ENCODE measurements at regions of chr19 and their contacts with region 1.

Region 1: DNA sequence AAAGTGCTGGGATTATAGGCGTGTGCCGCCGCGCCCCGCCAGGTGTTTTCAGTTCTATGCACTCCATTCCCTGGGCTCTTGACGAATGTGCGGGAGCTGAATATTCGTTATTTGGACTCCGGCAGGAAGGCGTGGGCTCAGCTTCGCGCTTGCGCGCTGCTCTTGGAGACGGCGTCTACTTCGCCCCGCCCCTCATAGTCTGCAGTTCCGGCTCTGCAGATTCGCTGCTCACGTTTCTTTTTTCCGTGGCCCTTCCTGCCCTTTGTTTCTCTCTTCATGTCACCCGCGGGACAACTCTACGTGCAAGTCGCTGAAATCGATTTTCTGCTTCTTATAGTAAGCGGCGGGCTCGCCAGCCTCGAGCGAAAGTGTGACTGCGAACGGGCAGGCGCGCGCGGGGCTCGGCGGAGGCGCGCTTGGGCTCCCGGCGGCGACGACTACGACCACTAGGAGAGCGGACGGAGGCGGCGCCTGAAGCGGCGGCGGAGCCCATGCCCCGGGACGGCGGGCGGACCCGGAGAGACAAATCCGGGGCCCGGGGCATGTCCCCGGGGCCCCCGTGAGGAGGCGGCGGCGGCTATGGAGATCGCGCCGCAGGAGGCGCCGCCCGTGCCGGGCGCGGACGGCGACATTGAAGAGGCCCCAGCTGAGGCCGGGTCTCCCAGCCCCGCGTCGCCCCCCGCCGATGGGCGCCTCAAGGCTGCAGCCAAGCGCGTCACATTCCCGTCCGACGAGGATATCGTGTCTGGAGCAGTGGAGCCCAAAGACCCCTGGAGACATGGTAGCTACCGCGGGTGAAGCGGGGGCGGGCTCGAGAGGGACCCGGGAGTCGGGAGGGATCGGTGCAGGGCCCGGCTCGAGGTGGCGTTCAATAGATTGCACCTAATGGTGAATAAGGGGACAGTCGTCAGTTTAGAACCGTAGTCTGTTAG is at the start of gene PPP1R37:
- DNase-seq: peak; percentile 97
- total RNA-seq, gene PPP1R37: 18.6 TPM

Region 2: DNA sequence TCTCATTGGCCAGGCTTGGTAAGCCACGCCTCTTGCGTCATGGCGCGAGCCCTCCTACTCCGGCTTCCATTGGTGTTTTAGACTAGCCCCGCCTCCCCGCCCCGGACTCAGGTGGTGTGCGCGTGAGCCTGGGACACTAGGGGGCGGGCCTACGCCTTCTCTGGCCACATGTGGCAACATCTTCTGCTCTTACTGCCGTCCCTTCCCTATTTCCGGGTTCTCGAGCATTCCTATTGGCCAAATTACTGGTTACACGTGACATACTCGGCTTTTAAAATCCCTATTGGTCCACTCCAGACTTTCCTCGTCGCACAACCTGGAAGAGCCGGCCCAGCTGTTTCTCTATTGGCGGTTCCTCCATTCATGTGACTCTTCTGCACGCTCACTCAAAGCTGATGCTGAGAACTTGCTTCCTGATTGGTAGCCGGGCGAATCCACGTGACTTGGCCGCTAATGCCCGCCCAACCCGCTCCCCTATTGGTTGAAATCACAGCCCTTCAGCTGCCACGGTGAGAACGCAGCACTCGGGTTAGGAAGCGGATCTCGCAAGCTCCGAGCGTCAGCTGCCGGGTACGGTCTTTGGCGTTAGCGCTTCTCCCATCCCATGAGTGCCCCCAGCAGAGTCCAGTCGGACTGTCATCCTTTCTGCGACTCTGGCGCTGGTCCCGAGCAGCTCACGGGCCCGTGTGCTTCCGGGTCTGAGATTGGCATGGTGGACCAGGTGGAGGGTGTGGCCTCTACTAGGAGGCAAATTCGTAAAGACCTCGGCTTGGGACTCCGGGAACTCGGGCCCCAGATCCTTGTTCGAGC is 85.5 kb after region 1 on chr19 and contains the start of gene BLOC1S3:
- intact Hi-C with region 1: loop called (anchors 5 kb)
- DNase-seq: peak; percentile 100
- total RNA-seq, gene BLOC1S3: 5.0 TPM